GM12878 (cell line): ENCODE measurements at regions of chr4 and their contacts with region 1.

Region 1: DNA sequence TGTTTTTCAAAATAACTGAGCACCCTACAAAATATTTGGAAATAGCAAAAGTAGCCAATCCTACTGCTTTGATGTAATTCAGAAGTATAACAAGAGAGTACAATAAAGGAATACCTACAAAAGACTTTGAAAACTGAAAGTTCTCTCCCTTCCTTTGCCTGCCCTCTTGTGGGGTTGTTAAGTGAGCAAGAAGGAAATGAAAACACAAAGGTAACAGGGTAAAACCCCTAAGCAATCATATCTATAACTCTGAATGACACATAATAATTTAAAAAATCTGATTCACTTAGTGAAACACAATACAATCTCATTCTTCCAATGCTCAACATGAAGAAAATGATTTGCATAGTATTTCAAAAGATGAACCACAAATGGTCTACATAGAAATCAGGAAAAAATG is 98.2 kb downstream of the FRYL start:
- DNase-seq: peak; percentile 35
- ATAC-seq: peak; percentile 94
- H3K4me3 ChIP-seq: no peak overlapping the region
- H3K27ac ChIP-seq: no peak overlapping the region
- H3K4me1 ChIP-seq: peaks cover 13% of the 10 kb centered on the region
- H3K27me3 ChIP-seq: no peaks in the 10 kb centered on the region
- CTCF ChIP-seq: peak; percentile 30 to 69 (median 38); a peak in 4 of 6 replicates
- EP300 ChIP-seq: no peak
- POLR2A ChIP-seq: no peak
- RAD21 ChIP-seq: peak; percentile 71

Region 2: GRCh38 chr4:48668254-48669017 is 13.4 kb before region 1 on chr4:
- CTCF ChIA-PET with region 1: interaction called, 12 read pairs
- POLR2A ChIA-PET with region 1: no interaction called
- RAD21 ChIA-PET with region 1: interaction called, 8 read pairs
- SMC1A ChIA-PET with region 1: interaction called, 19 read pairs
- in situ Hi-C with region 1: no loop called
- intact Hi-C with region 1: no loop called
- DNase-seq: no peak
- ATAC-seq: peak; percentile 59
- H3K4me3 ChIP-seq: no peak overlapping the region
- H3K27ac ChIP-seq: 0 out of 2 replicates have a peak overlapping the region, but pooled peaks have one; percentile 11
- H3K4me1 ChIP-seq: no peaks in the 10 kb centered on the region
- H3K27me3 ChIP-seq: no peaks in the 10 kb centered on the region
- CTCF ChIP-seq: no peak
- EP300 ChIP-seq: no peak
- POLR2A ChIP-seq: no peak
- RAD21 ChIP-seq: no peak

Region 3: GRCh38 chr4:48906206-48907173 is 224.6 kb after region 1 on chr4 and contains the start of gene OCIAD2:
- CTCF ChIA-PET with region 1: no interaction called
- POLR2A ChIA-PET with region 1: no interaction called
- RAD21 ChIA-PET with region 1: interaction called, 3 read pairs
- SMC1A ChIA-PET with region 1: no interaction called
- in situ Hi-C with region 1: no loop called
- intact Hi-C with region 1: loop called (anchors 5 kb)
- DNase-seq: peak; percentile 39
- ATAC-seq: peak; percentile 96
- H3K4me3 ChIP-seq: peak within 1 kb of the TSS; percentile 86
- H3K27ac ChIP-seq: peak within 1 kb of the TSS; percentile 43; the same call in 1 of the 2 replicates
- H3K4me1 ChIP-seq: 0 out of 2 replicates have a peak, but pooled peaks cover 4% of the 10 kb centered on the region
- H3K27me3 ChIP-seq: no peaks in the 10 kb centered on the region
- CTCF ChIP-seq: peak; percentile 26 to 55 (median 34); a peak in 4 of 6 replicates
- EP300 ChIP-seq: no peak
- POLR2A ChIP-seq: peak; percentile 92
- RAD21 ChIP-seq: peak; percentile 50
- polyA plus RNA-seq, gene OCIAD2: 60.1 to 65.1 TPM